ENCODE measurements at regions of chr20 and their contacts with region 1.

Region 1: GRCh38 chr20:49982346-49983122 is at the start of gene SNAI1:
- DNase-seq: peak; percentile 80
- H3K4me3 ChIP-seq: peak within 1 kb of the TSS; percentile 41
- H3K27ac ChIP-seq: no peak within 1 kb of the TSS
- H3K4me1 ChIP-seq: peaks cover 14% of the 10 kb centered on the region
- H3K27me3 ChIP-seq: no peaks in the 10 kb centered on the region
- CTCF ChIP-seq: peak; percentile 38
- total RNA-seq, gene SNAI1: 0.59 to 4.5 TPM

Region 2: GRCh38 chr20:50041246-50041873 is 58.8 kb after region 1 on chr20:
- intact Hi-C with region 1: no loop called
- DNase-seq: no peak
- H3K4me3 ChIP-seq: no peak overlapping the region
- H3K27ac ChIP-seq: no peak overlapping the region
- H3K4me1 ChIP-seq: no peaks in the 10 kb centered on the region
- H3K27me3 ChIP-seq: no peaks in the 10 kb centered on the region
- CTCF ChIP-seq: no peak

Region 3: GRCh38 chr20:50070991-50071888 is 88.7 kb after region 1 on chr20:
- intact Hi-C with region 1: loop called (anchors 1 kb)
- DNase-seq: peak; percentile 94
- H3K4me3 ChIP-seq: peak overlapping the region; percentile 23
- H3K27ac ChIP-seq: no peak overlapping the region
- H3K4me1 ChIP-seq: no peaks in the 10 kb centered on the region
- H3K27me3 ChIP-seq: no peaks in the 10 kb centered on the region
- CTCF ChIP-seq: peak; percentile 99

Region 4: DNA sequence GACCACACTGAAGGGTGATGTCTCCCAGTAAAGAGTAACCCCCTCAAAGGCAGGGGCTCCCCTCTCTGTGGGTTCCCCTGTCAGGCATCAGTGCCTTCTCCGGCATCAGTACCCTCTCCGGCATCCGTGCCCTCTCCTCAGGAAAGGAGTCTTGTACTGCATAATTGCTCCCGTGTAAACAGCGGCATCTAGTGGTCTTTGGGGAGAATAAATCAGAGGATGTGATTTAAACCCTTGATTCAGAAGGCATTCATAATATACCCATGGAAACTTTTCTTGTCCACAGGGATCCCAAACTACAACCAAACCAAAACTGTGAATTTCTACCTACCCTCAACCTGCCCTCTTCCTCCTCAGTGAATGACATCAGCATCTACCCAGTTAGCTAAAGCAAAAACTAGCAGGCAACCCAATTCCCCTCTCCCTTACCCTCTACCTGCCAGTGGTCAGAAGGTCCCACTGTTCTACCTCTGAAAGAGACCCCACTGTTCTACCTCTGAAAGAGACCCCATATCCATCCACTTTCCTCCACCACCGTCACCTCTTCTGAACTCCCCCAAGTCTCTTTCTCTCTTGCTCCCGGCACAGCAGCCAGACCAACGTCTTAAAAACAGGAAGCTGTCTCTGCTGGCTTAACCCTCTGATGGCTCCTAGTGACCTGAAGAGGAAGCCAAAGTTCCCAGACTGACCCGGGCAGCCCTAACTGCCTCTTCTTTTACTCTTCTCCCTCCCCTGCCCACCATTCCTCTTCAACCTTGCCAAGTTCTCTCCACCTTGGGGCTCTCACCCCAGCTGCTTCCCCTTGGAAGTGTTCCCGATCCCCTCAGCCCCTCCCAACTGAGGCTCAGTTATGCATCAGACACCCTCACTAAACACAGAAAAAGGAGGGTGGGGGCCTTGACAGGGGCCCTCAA is 103.2 kb after region 1 on chr20:
- intact Hi-C with region 1: no loop called
- DNase-seq: peak; percentile 52
- H3K4me3 ChIP-seq: no peak overlapping the region
- H3K27ac ChIP-seq: peak overlapping the region; percentile 10
- H3K4me1 ChIP-seq: peaks cover 9% of the 10 kb centered on the region
- H3K27me3 ChIP-seq: no peaks in the 10 kb centered on the region
- CTCF ChIP-seq: peak; percentile 80

Region 5: DNA sequence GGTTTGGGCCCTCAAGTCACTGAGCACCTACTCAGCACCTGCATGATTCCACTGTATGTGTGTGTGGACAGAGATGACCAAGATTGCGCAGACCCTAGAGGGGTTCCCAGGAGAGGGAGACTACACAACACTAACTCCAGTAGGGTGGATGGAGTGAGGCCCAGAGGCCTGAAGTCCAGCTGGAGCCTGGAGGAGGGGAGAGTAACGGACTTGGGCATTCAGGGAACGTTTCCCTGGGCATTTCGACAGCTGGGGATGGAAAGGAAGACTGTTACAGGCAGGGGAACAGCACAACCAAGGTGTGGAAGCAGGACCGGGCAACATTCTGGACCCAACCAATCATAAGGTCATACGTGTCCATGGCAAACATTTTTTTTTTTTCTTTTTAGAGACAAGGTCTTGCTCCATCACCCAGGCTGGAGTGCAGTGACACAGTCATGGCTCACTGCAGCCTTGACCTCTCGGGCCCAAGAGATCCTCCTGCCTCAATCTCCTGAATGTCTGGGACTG is 197.0 kb after region 1 on chr20:
- intact Hi-C with region 1: loop called (anchors 5 kb)
- DNase-seq: no peak
- H3K4me3 ChIP-seq: no peak overlapping the region
- H3K27ac ChIP-seq: no peak overlapping the region
- H3K4me1 ChIP-seq: no peaks in the 10 kb centered on the region
- H3K27me3 ChIP-seq: no peaks in the 10 kb centered on the region
- CTCF ChIP-seq: peak; percentile 8